ENCODE measurements at regions of chr1 and their contacts with region 1.

Region 1: DNA sequence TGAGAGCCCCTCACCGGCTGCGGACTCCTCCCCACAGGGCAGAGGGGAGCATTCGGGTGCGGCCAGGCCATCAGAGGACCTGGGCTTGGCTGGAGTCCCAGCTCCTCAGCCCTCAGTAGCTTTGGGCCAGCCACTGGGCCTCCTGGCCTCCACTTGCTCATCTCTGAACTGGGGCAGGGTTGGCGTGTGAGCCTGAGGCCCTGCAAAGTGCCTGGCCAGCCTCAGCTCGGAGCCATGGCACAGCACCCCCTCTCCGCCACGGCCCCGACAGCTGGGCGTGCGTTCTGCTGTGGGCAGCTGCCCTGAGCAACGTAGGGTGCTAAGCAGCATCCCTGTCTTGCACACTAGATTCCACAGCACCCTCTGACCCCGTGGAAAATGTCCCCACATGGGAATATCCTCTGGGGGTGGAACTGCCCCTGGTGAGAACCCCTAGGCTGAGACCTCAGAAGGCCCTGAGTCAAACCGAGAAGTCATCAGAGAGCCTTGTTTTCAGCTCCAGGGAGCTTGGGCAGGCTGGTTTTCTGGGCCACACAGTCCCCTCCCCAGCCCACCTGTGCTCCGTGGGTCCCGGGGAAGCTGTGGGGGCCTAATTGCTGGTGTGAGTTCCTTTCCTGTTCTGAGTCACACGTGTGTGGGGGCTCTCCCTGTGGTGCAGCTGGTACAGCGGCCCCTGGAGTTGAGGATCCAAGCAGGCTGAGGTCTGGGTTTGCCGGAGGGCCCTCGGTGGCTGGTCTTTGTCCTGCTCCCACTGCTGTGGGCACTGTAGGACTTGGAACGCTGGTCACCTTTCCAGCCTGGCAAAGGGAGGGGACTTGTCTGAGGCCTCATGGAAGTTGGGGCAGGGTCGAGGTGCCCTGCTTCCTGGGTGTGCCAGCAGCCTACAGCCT is 24.5 kb downstream of the TP73 start:
- DNase-seq: peak; percentile 57
- ATAC-seq: peak; percentile 66
- H3K4me3 Mint-ChIP-seq: peak overlapping the region; percentile 69
- H3K27ac Mint-ChIP-seq: peak overlapping the region; percentile 81
- H3K4me1 Mint-ChIP-seq: peaks cover 84% of the 10 kb centered on the region
- H3K27me3 Mint-ChIP-seq: no peaks in the 10 kb centered on the region
- CTCF ChIP-seq: no peak

Region 2: GRCh38 chr1:2575801-2576663 is 1100.8 kb before region 1 on chr1:
- CTCF ChIA-PET with region 1: no interaction called
- POLR2A ChIA-PET with region 1: interaction called, 12 read pairs
- intact Hi-C with region 1: no loop called
- DNase-seq: no peak
- ATAC-seq: no peak
- H3K4me3 Mint-ChIP-seq: peak overlapping the region; percentile 78
- H3K27ac Mint-ChIP-seq: peak overlapping the region; percentile 95
- H3K4me1 Mint-ChIP-seq: peaks cover 72% of the 10 kb centered on the region
- H3K27me3 Mint-ChIP-seq: no peaks in the 10 kb centered on the region
- CTCF ChIP-seq: no peak

Region 3: GRCh38 chr1:3612123-3612522 is 64.7 kb before region 1 on chr1:
- CTCF ChIA-PET with region 1: no interaction called
- POLR2A ChIA-PET with region 1: no interaction called
- intact Hi-C with region 1: no loop called
- DNase-seq: no peak
- ATAC-seq: no peak
- H3K4me3 Mint-ChIP-seq: peak overlapping the region; percentile 77
- H3K27ac Mint-ChIP-seq: no peak overlapping the region
- H3K4me1 Mint-ChIP-seq: peaks cover 10% of the 10 kb centered on the region
- H3K27me3 Mint-ChIP-seq: peaks cover 32% of the 10 kb centered on the region
- CTCF ChIP-seq: no peak

Region 4: DNA sequence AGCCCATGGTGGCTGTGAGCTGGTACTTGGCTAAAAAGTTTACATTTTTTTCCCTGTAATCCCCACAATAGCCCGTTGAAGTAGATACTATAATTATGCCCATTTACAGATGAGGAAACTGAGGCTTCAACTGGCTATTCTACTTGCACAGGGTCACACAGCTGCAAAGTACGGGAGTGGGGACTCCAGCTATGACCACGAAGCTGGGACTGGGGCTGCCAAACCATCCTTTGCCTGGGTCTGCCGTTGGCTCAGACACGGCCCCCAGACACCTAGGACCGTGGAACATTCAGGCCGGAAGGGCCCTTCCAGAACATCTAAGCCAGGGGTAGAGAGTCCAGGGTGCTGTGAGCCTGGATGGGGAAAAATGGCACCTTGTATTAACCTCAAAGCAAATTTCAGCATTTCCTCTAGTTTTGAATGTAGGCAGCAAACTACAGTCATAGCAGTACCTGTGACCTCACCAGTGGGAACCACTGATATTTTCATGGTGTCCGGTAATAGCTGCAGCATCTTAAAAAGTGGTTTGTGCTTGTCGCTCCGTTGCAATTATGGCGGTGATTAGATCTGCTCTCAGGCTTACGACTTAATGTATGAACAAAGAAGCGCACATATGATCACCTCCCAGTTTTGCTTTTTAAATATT is 20.3 kb before region 1 on chr1:
- CTCF ChIA-PET with region 1: interaction called, 4 read pairs
- POLR2A ChIA-PET with region 1: interaction called, 31 read pairs
- intact Hi-C with region 1: loop called (anchors 1 kb)
- DNase-seq: no peak
- ATAC-seq: peak; percentile 68
- H3K4me3 Mint-ChIP-seq: peak overlapping the region; percentile 42
- H3K27ac Mint-ChIP-seq: peak overlapping the region; percentile 68
- H3K4me1 Mint-ChIP-seq: peaks cover 30% of the 10 kb centered on the region
- H3K27me3 Mint-ChIP-seq: peaks cover 32% of the 10 kb centered on the region
- CTCF ChIP-seq: no peak

Measured in activated B cell treated with CpG ODN at 0.5 μM for 24 hours (primary cell).